Mammary epithelial cell (primary cell): ENCODE measurements at regions of chr13 and their contacts with region 1.

Region 1: GRCh38 chr13:20860844-20861243 is 41.7 kb downstream of the XPO4 start:
- DNase-seq: no peak
- H3K4me3 ChIP-seq: no peak overlapping the region
- H3K27ac ChIP-seq: no peak overlapping the region
- H3K4me1 ChIP-seq: no peaks in the 10 kb centered on the region
- H3K27me3 ChIP-seq: no peaks in the 10 kb centered on the region
- CTCF ChIP-seq: no peak

Region 2: GRCh38 chr13:20713751-20714150 is 147.1 kb before region 1 on chr13:
- CTCF ChIA-PET with region 1: no interaction called
- dilution Hi-C with region 1: no loop called
- in situ Hi-C with region 1: no loop called
- intact Hi-C with region 1: loop called (anchors 5 kb)
- DNase-seq: no peak
- H3K4me3 ChIP-seq: no peak overlapping the region
- H3K27ac ChIP-seq: no peak overlapping the region
- H3K4me1 ChIP-seq: no peaks in the 10 kb centered on the region
- H3K27me3 ChIP-seq: no peaks in the 10 kb centered on the region
- CTCF ChIP-seq: no peak

Region 3: GRCh38 chr13:20749377-20749776 is 111.5 kb before region 1 on chr13:
- CTCF ChIA-PET with region 1: no interaction called
- dilution Hi-C with region 1: no loop called
- in situ Hi-C with region 1: no loop called
- intact Hi-C with region 1: no loop called
- DNase-seq: no peak
- H3K4me3 ChIP-seq: no peak overlapping the region
- H3K27ac ChIP-seq: no peak overlapping the region
- H3K4me1 ChIP-seq: no peaks in the 10 kb centered on the region
- H3K27me3 ChIP-seq: no peaks in the 10 kb centered on the region
- CTCF ChIP-seq: no peak